ENCODE measurements at regions of chr3 and their contacts with region 1.

Region 1: DNA sequence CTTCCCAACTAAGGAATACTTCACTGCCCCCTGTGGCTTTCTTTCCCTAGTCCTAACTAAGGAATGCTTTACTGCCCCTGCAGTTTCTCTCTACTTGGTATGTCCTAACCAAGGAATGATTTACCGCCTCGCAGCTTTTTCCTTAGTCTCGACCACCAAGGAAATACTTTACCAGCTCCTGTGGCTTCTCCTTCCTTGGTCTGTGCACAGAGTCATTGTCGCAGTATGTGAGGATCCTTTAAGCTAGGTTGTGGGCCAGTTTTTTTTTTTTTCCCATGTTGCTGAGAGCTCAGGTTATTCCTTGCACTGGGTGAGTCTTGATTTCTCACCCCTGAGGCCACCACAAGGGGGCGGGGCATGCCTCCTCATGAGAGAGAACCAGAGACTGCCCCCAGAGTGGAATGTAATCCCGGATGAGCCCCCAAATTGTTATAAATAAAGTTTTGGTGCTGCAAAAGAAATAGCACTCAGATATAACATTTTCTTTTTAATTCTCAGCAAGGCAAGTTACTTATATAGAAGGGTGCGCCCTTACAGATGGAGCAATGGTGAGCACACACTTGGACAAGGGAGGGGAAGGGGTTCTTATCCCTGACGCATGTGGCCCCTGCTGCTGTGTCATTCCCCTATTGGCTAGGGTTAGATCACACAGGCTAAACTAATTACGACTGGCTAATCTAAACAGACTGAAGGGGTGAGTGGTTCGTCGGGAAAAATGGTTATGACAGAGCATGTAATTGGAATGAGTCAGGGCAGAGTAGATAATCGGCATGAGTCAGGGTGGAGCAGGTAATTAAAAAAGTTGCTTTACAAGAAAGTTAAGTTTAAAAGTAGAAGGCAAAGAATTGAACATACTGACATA is 27.0 kb downstream of the NDUFB4 start:
- DNase-seq: peak; percentile 48 to 79
- ATAC-seq: peak; percentile 86 to 92
- H3K4me3 ChIP-seq: no peak overlapping the region
- H3K27ac ChIP-seq: peak overlapping the region; percentile 39 to 56; a peak in 5 of 6 replicates
- H3K4me1 ChIP-seq: peaks cover 20% of the 10 kb centered on the region; the same call in 2 of the 3 replicates
- CTCF ChIP-seq: peak; percentile 77
- EP300 ChIP-seq: no peak
- POLR2A ChIP-seq: no peak
- RAD21 ChIP-seq: peak; percentile 92 to 95

Region 2: DNA sequence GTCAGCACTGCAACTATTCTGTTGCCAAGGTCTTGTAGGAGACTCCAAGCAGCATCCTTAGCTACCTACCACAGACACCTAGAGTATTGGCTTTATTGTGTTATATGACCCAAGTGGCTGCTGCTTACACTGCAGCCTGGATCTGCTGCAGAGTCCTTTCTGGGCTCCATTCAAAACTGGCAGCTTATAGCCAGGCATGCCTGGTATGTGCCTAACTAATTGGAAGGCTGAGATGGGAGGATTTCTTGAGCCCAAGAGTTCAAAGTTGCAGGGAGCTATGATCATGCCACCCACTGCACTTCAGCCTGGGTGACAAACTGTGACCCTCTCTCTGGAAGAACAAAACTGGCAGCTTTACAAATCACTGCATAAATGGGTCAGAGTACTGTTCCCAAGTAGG is 18.3 kb before region 1 on chr3:
- CTCF ChIA-PET with region 1: interaction called, 13 read pairs
- POLR2A ChIA-PET with region 1: no interaction called
- DNase-seq: no peak
- ATAC-seq: peak; percentile 73 to 76
- H3K4me3 ChIP-seq: no peak overlapping the region
- H3K27ac ChIP-seq: no peak overlapping the region
- H3K4me1 ChIP-seq: no peaks in the 10 kb centered on the region
- CTCF ChIP-seq: no peak
- EP300 ChIP-seq: no peak
- POLR2A ChIP-seq: no peak
- RAD21 ChIP-seq: no peak

Region 3: DNA sequence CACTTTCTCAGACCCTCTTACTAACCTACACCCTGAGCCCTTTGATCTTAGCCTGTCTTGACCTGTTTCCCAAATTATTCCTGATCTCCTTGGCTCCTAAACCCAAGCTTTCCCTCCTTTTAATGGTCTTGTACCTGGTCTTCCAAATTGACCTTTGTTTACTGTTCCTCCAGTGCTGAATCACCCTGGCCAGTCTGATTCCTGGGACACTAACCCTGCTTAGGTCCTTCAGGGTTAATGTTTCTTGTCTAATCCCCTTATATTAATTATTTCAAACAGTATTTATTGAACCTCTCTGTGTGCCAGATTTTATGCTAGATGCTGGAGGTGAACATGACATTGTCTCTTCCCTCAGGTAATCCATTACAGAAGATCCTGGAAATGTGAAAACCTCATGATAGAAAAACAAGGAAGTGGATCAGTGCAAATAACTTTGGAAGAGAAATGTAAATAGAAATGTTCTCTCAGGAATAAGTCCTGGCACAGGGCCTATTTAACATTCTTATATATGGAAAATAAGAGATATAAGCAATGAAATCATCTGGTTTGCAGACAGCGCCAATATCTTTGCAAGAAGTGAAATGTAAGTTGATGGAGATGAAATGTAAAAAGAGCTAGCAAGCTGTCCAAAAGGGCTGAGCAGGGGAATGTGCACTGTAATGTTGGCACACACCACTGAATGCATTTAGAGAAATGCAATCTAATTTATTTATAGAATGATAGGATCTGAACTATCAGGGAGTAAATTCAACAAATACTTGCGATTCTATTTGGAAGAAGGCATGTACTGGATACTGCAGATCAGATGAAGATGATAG is 38.2 kb after region 1 on chr3:
- CTCF ChIA-PET with region 1: no interaction called
- POLR2A ChIA-PET with region 1: no interaction called
- DNase-seq: peak; percentile 7 to 68
- ATAC-seq: peak; percentile 50 to 81; a peak in 4 of 6 replicates
- H3K4me3 ChIP-seq: no peak overlapping the region; the same call in 2 of the 3 replicates
- H3K27ac ChIP-seq: peak overlapping the region; percentile 64 to 78
- H3K4me1 ChIP-seq: peaks cover 39% of the 10 kb centered on the region
- CTCF ChIP-seq: no peak
- EP300 ChIP-seq: 0 out of 5 replicates have a peak, but pooled peaks of 1 of the 2 experiments have one; percentile 20
- POLR2A ChIP-seq: no peak
- RAD21 ChIP-seq: no peak

Measured in A549 (cell line).